Activated T-helper 2 cell treated with anti-CD3 and anti-CD28 coated beads, Interferon-gamma antibody, Interleukin-2, Interleukin-4, amounts not matched to agents 10 μg/mL and 5 μg/mL and 100 μg/mL, durations not matched to agents 14 hours and 24 hours and 36 hours (primary cell): ENCODE measurements at regions of chr7 and their contacts with region 1.

Region 1: GRCh38 chr7:139777948-139778841 is at the start of gene HIPK2:
- DNase-seq: peak; percentile 55
- H3K4me3 Mint-ChIP-seq: peak within 1 kb of the TSS; percentile 95
- H3K27ac Mint-ChIP-seq: peak within 1 kb of the TSS; percentile 94
- H3K4me1 Mint-ChIP-seq: peaks cover 44% of the 10 kb centered on the region
- H3K27me3 Mint-ChIP-seq: peaks cover 19% of the 10 kb centered on the region
- total RNA-seq, gene HIPK2: 27.6 and 27.7 TPM in 2 replicates

Region 2: GRCh38 chr7:139645572-139646523 is 132.3 kb before region 1 on chr7:
- intact Hi-C with region 1: loop called (anchors 1 kb)
- DNase-seq: peak; percentile 69
- H3K4me3 Mint-ChIP-seq: no peak overlapping the region
- H3K27ac Mint-ChIP-seq: no peak overlapping the region
- H3K4me1 Mint-ChIP-seq: peaks cover 44% of the 10 kb centered on the region
- H3K27me3 Mint-ChIP-seq: no peaks in the 10 kb centered on the region

Region 3: DNA sequence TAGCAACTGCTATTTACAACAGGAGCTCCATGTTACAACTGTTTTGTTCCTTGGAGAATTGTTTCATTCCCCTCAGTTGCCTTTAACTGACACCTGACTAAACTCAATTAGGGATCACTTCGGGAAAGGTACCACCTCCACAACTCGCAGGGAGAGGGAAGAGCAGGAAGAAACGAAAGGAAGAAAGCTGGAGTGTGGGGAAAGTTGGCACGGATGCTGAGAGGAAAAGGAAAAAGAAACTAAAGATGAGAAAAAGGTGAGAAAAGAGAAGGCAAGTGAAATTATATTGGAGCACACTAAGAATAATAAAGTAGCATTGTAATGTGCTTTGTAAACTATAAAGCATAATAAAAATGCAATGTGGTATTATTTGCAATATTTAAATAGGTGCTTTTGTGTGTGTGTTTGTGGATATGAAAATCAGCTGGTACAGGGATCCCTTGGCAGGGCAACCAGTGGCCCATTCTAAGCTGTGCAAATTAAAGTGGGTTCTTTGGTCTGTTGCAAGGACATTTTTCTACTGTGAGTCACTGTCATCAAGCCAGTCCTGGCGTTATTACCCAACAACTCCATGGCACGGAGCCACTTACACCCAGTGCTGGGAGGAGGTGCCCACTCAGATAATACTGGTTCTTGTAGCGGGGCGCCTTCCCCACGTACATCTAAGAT is 46.3 kb before region 1 on chr7:
- intact Hi-C with region 1: loop called (anchors 2 kb)
- DNase-seq: no peak
- H3K4me3 Mint-ChIP-seq: peak overlapping the region; percentile 46
- H3K27ac Mint-ChIP-seq: peak overlapping the region; percentile 66
- H3K4me1 Mint-ChIP-seq: peaks cover 43% of the 10 kb centered on the region
- H3K27me3 Mint-ChIP-seq: no peaks in the 10 kb centered on the region

Region 4: GRCh38 chr7:139798221-139798620 is 20.0 kb after region 1 on chr7:
- intact Hi-C with region 1: no loop called
- DNase-seq: no peak
- H3K4me3 Mint-ChIP-seq: no peak overlapping the region
- H3K27ac Mint-ChIP-seq: peak overlapping the region; percentile 5
- H3K4me1 Mint-ChIP-seq: peaks cover 13% of the 10 kb centered on the region
- H3K27me3 Mint-ChIP-seq: no peaks in the 10 kb centered on the region

Region 5: GRCh38 chr7:139915864-139916716 is 137.9 kb after region 1 on chr7:
- intact Hi-C with region 1: loop called (anchors 2 kb)
- DNase-seq: peak; percentile 55
- H3K4me3 Mint-ChIP-seq: no peak overlapping the region
- H3K27ac Mint-ChIP-seq: peak overlapping the region; percentile 9
- H3K4me1 Mint-ChIP-seq: peaks cover 19% of the 10 kb centered on the region
- H3K27me3 Mint-ChIP-seq: peaks cover 5% of the 10 kb centered on the region

Region 6: DNA sequence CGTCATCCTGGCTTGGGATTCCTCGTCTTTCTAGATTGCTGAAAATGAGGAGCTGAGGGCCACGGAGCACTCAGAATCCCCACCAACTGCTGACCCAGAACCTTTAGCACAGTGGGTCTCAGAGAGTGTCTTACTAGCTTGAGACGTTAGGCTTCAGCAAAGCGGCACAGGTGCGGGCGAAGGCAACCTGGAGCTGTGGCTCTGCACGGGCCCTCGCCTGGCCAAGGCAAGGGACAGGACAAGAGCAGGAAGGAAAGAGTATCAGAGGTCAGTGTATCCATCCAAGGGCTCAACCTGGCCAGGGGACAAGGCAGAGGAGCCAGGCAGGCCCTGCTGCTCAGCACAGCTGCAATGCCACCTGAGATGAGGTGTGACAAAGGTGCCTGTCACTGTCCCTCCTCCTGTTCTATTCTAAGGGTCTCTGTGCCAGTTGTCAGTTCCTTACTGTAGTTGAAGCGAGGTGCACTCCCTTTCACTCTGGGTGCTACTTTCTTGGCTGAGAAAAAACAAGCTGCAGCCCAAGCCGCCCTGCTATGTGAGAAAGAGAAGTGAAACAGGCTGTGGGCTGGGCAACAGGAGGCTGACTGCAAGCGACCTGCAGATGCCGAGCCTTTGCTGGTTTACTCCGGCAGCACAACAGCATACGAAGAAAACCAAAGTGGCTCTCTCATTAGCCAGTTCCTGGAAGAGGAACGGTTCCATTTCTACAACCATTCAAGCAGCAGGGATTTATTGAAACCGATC is 431.8 kb after region 1 on chr7:
- intact Hi-C with region 1: loop called (anchors 5 kb)
- DNase-seq: peak; percentile 62
- H3K4me3 Mint-ChIP-seq: peak overlapping the region; percentile 49
- H3K27ac Mint-ChIP-seq: peak overlapping the region; percentile 70
- H3K4me1 Mint-ChIP-seq: peaks cover 61% of the 10 kb centered on the region
- H3K27me3 Mint-ChIP-seq: peaks cover 3% of the 10 kb centered on the region